Activated CD4-positive, alpha-beta T cell treated with anti-CD3 and anti-CD28 coated beads for 36 hours (primary cell): ENCODE measurements at regions of chr4 and their contacts with region 1.

Region 1: DNA sequence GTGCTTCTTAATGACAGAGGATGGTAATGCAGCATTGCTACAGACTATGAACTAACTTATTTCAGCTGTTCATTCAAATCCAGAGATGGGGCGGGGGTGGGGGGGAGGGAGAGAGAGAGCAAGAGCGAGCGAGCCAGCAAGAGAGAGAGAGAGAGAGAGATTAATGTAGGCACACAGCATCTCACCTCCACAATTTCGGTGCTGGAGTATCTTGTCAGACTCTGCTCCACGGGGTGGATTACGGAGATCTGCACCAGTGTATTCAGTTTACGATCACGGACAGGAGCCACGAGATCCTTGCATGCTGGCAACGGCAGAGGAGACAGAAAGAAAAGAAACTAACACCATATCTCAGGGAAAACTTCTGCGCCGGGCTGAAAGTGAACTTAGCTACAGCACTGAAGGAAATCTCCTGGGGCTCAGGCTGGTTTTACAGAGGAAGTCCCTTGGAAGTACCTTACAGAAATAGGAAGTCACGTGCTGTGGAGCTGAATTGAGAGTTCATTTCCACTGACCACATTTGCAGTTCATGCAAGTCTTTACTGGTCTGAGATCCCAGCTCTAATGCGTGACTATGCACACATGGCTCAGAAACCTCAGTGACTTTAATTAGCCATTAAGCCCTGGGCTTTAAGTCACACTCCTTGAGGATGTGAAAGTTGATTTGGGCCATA is 440.9 kb downstream of the INPP4B start:
- DNase-seq: peak; percentile 78
- ATAC-seq: peak; percentile 50
- H3K4me3 Mint-ChIP-seq: peak overlapping the region; percentile 87
- H3K27ac Mint-ChIP-seq: peak overlapping the region; percentile 99
- H3K4me1 Mint-ChIP-seq: peaks cover 51% of the 10 kb centered on the region
- H3K27me3 Mint-ChIP-seq: no peaks in the 10 kb centered on the region

Region 2: GRCh38 chr4:142274137-142274536 is 131.0 kb before region 1 on chr4:
- CTCF ChIA-PET with region 1: no interaction called
- POLR2A ChIA-PET with region 1: no interaction called
- intact Hi-C with region 1: loop called in 1 of 2 experiments (anchors 5 kb)
- DNase-seq: no peak
- ATAC-seq: peak; percentile 66
- H3K4me3 Mint-ChIP-seq: no peak overlapping the region
- H3K27ac Mint-ChIP-seq: peak overlapping the region; percentile 84
- H3K4me1 Mint-ChIP-seq: peaks cover 84% of the 10 kb centered on the region
- H3K27me3 Mint-ChIP-seq: no peaks in the 10 kb centered on the region

Region 3: GRCh38 chr4:142353149-142353738 is 51.9 kb before region 1 on chr4:
- CTCF ChIA-PET with region 1: interaction called, 31 read pairs
- POLR2A ChIA-PET with region 1: interaction called, 3 read pairs
- intact Hi-C with region 1: loop called (anchors 2 kb)
- DNase-seq: no peak
- ATAC-seq: peak; percentile 20
- H3K4me3 Mint-ChIP-seq: peak overlapping the region; percentile 37
- H3K27ac Mint-ChIP-seq: peak overlapping the region; percentile 97
- H3K4me1 Mint-ChIP-seq: peaks cover 97% of the 10 kb centered on the region
- H3K27me3 Mint-ChIP-seq: no peaks in the 10 kb centered on the region

Region 4: GRCh38 chr4:142549726-142550463 is 144.7 kb after region 1 on chr4:
- CTCF ChIA-PET with region 1: interaction called, 4 read pairs
- POLR2A ChIA-PET with region 1: interaction called, 5 read pairs
- intact Hi-C with region 1: loop called in 1 of 2 experiments (anchors 5 kb)
- DNase-seq: no peak
- ATAC-seq: peak; percentile 83
- H3K4me3 Mint-ChIP-seq: no peak overlapping the region
- H3K27ac Mint-ChIP-seq: peak overlapping the region; percentile 86
- H3K4me1 Mint-ChIP-seq: peaks cover 66% of the 10 kb centered on the region
- H3K27me3 Mint-ChIP-seq: no peaks in the 10 kb centered on the region

Region 5: DNA sequence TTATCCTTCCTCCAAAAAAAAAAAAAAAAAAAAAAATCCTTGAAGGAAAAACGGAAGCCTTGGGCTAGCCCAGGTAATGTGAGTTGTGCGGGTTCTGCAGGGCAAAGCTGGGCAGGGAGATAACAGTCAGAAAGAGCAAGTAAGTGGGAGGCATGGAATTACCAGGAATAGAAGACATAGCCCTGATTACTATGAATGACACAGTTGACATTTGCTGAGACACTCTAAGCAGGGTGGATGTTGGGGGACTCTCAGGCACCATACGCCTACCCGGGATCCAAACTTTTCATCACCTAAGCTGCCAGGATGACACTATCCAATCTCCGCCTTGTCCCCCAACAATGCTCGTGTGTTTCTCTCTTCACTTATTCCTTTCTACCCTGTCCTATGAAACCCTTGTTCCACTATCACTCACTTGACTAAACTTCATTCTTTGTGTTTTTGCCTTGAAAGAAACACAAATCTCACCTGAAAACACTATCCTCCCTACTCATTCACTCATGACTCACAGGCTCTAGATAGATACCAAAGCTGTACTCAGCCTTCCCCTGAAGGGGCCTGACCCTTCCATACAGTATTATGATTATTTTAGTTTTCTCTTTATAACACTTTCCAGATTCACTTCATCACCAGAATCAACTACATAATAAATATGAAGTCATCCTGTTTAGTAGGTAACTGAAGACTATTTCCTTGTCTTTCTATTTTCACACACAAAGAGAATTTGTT is 282.6 kb after region 1 on chr4:
- CTCF ChIA-PET with region 1: no interaction called
- POLR2A ChIA-PET with region 1: no interaction called
- intact Hi-C with region 1: no loop called
- DNase-seq: no peak
- ATAC-seq: peak; percentile 92
- H3K4me3 Mint-ChIP-seq: no peak overlapping the region
- H3K27ac Mint-ChIP-seq: peak overlapping the region; percentile 27
- H3K4me1 Mint-ChIP-seq: peaks cover 33% of the 10 kb centered on the region
- H3K27me3 Mint-ChIP-seq: no peaks in the 10 kb centered on the region

Region 6: GRCh38 chr4:142719854-142720541 is 314.8 kb after region 1 on chr4:
- CTCF ChIA-PET with region 1: interaction called, 3 read pairs
- POLR2A ChIA-PET with region 1: interaction called, 4 read pairs
- intact Hi-C with region 1: loop called in 1 of 2 experiments (anchors 2 kb)
- DNase-seq: no peak
- ATAC-seq: peak; percentile 70
- H3K4me3 Mint-ChIP-seq: no peak overlapping the region
- H3K27ac Mint-ChIP-seq: peak overlapping the region; percentile 47
- H3K4me1 Mint-ChIP-seq: peaks cover 34% of the 10 kb centered on the region
- H3K27me3 Mint-ChIP-seq: no peaks in the 10 kb centered on the region

Region 7: DNA sequence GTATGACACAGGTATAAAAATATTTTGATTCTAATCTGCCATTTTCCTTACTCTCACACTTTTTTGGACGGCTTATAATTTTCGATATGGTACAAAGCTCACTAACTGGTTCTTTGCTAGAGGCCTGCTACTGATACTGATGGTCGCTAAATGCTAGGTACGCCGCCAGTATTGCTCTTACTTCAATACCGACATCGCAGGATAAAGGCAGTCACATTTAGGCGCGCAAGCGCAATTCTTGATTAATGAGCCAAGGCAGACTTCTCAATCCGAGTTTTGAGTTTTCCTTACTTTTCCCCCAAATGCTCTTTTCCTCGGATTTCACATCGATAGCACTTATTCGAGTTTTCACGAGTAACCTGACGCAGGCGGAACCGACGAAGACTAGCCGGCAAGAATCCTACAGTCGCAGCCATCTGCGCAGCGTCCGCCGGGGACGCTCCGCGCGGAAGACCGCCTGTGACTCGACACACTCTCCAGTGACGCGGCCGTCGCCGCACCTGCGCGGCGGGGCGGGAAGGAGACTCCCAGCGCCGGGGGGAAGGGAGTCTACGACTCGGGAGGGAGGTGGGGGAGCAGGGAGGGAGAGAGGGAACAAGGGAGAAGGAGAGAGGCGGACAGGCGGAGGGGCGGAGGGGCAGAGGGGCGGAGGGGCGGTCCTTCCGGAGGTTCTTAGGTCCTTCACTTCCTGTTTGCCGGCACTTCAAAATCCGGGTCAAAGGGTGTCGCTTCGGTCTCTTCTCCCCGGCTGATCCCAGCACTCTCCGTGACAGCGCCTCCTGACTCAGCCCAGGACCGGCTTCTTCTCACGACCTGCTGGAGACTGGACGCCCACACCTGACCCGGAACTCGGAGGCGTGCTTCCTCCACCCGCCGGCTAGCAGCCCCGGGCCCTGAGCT is 779.3 kb after region 1 on chr4 and contains the start of gene USP38:
- CTCF ChIA-PET with region 1: no interaction called
- POLR2A ChIA-PET with region 1: no interaction called
- intact Hi-C with region 1: loop called in 1 of 2 experiments (anchors 10 kb)
- DNase-seq: peak; percentile 95
- ATAC-seq: peak; percentile 90
- H3K4me3 Mint-ChIP-seq: peak within 1 kb of the TSS; percentile 85
- H3K27ac Mint-ChIP-seq: peak within 1 kb of the TSS; percentile 97
- H3K4me1 Mint-ChIP-seq: peaks cover 38% of the 10 kb centered on the region
- H3K27me3 Mint-ChIP-seq: no peaks in the 10 kb centered on the region
- total RNA-seq, gene USP38: 17.4 to 20.0 TPM